ENCODE measurements at regions of chr6 and their contacts with region 1.

Region 1: DNA sequence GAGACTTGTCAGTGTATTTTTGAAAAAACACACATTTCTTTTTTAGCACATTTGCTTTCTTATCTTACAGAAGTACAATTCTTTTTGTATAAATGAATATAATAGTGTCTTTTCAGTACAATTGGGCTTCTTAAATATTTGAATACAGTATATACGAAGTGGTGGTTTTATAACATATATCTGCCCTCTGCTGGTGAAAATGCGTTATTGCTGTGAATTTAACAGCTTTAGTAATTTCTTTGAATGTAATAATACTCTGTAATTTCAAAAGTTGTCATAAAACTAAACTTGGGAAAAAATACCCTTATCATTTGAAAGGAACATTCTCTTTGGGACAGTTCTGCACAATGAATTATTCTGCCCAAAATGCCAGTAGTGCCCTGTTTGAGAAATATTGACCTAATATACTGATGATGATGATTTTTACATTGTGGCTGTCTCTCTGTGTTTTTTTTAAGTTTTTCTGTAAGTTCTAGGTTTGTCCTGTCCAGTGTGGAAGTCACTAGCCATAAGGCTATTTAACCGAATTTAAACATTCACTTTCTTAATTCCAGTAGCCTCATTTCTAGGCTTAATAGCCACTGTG is 19.0 kb downstream of the SMAP1 start:
- DNase-seq: peak; percentile 70
- H3K4me3 Mint-ChIP-seq: no peak overlapping the region
- H3K27ac Mint-ChIP-seq: no peak overlapping the region
- H3K4me1 Mint-ChIP-seq: peaks cover 29% of the 10 kb centered on the region
- H3K27me3 Mint-ChIP-seq: no peaks in the 10 kb centered on the region

Region 2: GRCh38 chr6:70310063-70310694 is 376.5 kb before region 1 on chr6:
- intact Hi-C with region 1: loop called (anchors 5 kb)
- DNase-seq: peak; percentile 63
- H3K4me3 Mint-ChIP-seq: no peak overlapping the region
- H3K27ac Mint-ChIP-seq: no peak overlapping the region
- H3K4me1 Mint-ChIP-seq: no peaks in the 10 kb centered on the region
- H3K27me3 Mint-ChIP-seq: peaks cover 20% of the 10 kb centered on the region

Region 3: DNA sequence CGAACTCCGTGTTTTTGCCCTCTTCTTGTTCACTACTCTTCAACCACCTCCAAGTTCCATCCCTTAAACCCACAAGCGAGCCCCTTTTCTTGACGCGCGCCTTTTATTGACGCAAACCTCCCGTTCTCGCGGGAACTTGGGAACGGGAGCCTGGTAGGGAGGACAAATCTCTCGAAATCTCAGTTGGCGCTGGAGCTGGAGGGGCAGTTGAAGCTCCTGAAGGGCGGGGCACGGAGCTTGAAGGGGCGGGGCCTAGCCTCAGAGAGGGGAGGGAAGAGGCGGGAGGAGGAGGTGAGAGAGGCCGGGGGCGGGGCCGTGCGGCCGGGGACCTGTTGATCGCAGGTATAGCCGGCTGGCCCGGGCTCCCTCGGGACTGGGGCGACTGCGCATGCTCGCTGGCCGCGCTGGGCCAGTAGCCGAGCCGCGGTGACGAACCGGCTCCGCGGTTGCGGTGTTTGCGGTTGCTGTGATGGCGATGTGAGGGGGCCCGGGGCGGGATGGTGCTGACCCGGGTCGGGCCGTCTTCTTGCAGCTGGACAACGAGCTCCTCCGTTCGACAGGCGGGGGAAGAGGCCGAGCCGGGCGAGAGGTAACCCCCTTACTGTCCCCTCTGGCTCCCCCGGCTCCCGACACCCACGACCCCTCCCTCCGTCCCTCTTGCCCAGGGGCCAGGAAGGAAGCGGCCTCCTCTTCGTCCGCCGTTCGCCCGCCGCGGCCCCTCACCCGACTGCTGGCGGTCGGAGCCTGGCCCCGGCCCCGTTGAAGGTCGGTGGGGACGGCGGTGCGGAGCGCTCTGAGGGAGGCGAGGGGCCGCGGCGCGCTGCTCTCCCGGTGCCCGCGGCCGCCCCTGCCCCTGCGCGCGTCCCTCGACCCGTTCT is 273.3 kb before region 1 on chr6 and contains the start of gene FAM135A:
- intact Hi-C with region 1: loop called (anchors 5 kb)
- DNase-seq: peak; percentile 98
- H3K4me3 Mint-ChIP-seq: peak within 1 kb of the TSS; percentile 92
- H3K27ac Mint-ChIP-seq: peak within 1 kb of the TSS; percentile 87
- H3K4me1 Mint-ChIP-seq: peaks cover 27% of the 10 kb centered on the region
- H3K27me3 Mint-ChIP-seq: peaks cover 7% of the 10 kb centered on the region
- total RNA-seq, gene FAM135A: 7.7 and 10.5 TPM in 2 replicates

Region 4: GRCh38 chr6:70547313-70547712 is 139.3 kb before region 1 on chr6:
- intact Hi-C with region 1: loop called (anchors 1 kb)
- DNase-seq: peak; percentile 73
- H3K4me3 Mint-ChIP-seq: no peak overlapping the region
- H3K27ac Mint-ChIP-seq: no peak overlapping the region
- H3K4me1 Mint-ChIP-seq: peaks cover 2% of the 10 kb centered on the region
- H3K27me3 Mint-ChIP-seq: peaks cover 2% of the 10 kb centered on the region

Region 5: GRCh38 chr6:70667711-70668498 is 18.7 kb before region 1 on chr6 and contains the start of gene SMAP1:
- intact Hi-C with region 1: loop called (anchors 2 kb)
- DNase-seq: peak; percentile 98
- H3K4me3 Mint-ChIP-seq: peak within 1 kb of the TSS; percentile 90
- H3K27ac Mint-ChIP-seq: peak within 1 kb of the TSS; percentile 94
- H3K4me1 Mint-ChIP-seq: peaks cover 52% of the 10 kb centered on the region
- H3K27me3 Mint-ChIP-seq: no peaks in the 10 kb centered on the region
- total RNA-seq, gene SMAP1: 21.5 and 23.2 TPM in 2 replicates

Measured in activated CD4-positive, alpha-beta T cell treated with anti-CD3 and anti-CD28 coated beads, Interleukin-2, amount 10 ng/mL, durations not matched to agents 24 days and 14 days (primary cell).